A673 (cell line): ENCODE measurements at regions of chr2 and their contacts with region 1.

Region 1: GRCh38 chr2:227415538-227416424 is 28.0 kb upstream of the SCYGR1 start:
- DNase-seq: peak; percentile 92
- H3K4me3 ChIP-seq: no peak overlapping the region
- H3K27ac ChIP-seq: peak overlapping the region; percentile 65
- H3K4me1 ChIP-seq: peaks cover 41% of the 10 kb centered on the region
- H3K27me3 ChIP-seq: no peaks in the 10 kb centered on the region
- CTCF ChIP-seq: no peak

Region 2: GRCh38 chr2:227363756-227364155 is 52.0 kb before region 1 on chr2:
- CTCF ChIA-PET with region 1: no interaction called
- POLR2A ChIA-PET with region 1: no interaction called
- intact Hi-C with region 1: no loop called
- DNase-seq: peak; percentile 43
- H3K4me3 ChIP-seq: no peak overlapping the region
- H3K27ac ChIP-seq: no peak overlapping the region
- H3K4me1 ChIP-seq: peaks cover 25% of the 10 kb centered on the region
- H3K27me3 ChIP-seq: no peaks in the 10 kb centered on the region
- CTCF ChIP-seq: peak; percentile 57

Region 3: DNA sequence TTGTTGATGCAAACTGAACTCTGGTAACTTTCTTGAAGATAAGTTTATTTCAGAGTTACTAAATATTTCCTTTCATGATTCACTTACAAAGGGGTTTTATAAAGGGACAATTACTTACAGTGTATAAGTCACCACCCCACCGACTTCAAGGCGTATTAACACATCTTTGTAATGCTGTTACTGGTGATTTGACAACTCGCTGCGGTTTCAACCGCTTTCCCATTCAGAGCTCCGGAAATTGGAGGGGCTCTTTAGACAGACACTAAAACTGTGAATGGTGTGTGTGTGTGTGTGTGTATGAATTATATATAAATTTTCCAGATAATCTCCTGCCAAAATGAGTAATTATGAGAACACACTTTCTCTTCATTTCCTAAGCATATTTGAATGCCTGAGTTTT is 41.6 kb before region 1 on chr2:
- CTCF ChIA-PET with region 1: no interaction called
- POLR2A ChIA-PET with region 1: no interaction called
- intact Hi-C with region 1: no loop called
- DNase-seq: peak; percentile 97
- H3K4me3 ChIP-seq: peak overlapping the region; percentile 14
- H3K27ac ChIP-seq: peak overlapping the region; percentile 75
- H3K4me1 ChIP-seq: peaks cover 79% of the 10 kb centered on the region
- H3K27me3 ChIP-seq: no peaks in the 10 kb centered on the region
- CTCF ChIP-seq: no peak

Region 4: DNA sequence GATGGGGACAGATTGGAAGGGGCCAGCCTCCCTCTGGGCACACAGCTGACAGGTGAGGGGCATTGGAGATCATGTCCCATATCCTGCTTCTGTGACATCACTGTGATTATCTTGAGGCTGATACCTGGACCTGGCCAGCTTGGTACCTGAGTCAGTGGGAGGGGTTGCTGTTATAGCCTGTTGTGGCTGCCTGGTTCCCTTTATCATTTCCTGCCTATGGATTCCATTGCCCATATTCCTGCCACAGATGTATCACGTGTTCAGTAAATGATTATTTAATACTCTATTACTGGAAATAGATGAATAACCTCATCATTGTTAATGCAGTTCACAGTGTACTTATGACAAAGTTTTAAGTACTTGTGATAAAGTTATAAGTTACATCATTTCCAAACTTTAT is 20.2 kb before region 1 on chr2:
- CTCF ChIA-PET with region 1: interaction called, 9 read pairs
- POLR2A ChIA-PET with region 1: interaction called, 19 read pairs
- intact Hi-C with region 1: no loop called
- DNase-seq: no peak
- H3K4me3 ChIP-seq: no peak overlapping the region
- H3K27ac ChIP-seq: no peak overlapping the region
- H3K4me1 ChIP-seq: no peaks in the 10 kb centered on the region
- H3K27me3 ChIP-seq: no peaks in the 10 kb centered on the region
- CTCF ChIP-seq: no peak